Activated T-helper 1 cell treated with anti-CD3 and anti-CD28 coated beads, Interleukin-12 subunit alpha, Interleukin-12 subunit beta, Interleukin-2, Interleukin-4 antibody, amounts not matched to agents 30 ng/mL and 10 ng/mL and 1 ng/mL, durations not matched to agents 14 hours and 24 hours and 36 hours (primary cell): ENCODE measurements at regions of chr16 and their contacts with region 1.

Region 1: GRCh38 chr16:66406534-66407221 is 20.4 kb upstream of the BEAN1 start:
- DNase-seq: peak; percentile 77
- H3K4me3 Mint-ChIP-seq: peak overlapping the region; percentile 84
- H3K27ac Mint-ChIP-seq: peak overlapping the region; percentile 25
- H3K4me1 Mint-ChIP-seq: peaks cover 26% of the 10 kb centered on the region
- H3K27me3 Mint-ChIP-seq: peaks cover 23% of the 10 kb centered on the region

Region 2: GRCh38 chr16:66483689-66484481 is 77.2 kb after region 1 on chr16:
- intact Hi-C with region 1: loop called (anchors 1 kb)
- DNase-seq: peak; percentile 68
- H3K4me3 Mint-ChIP-seq: no peak overlapping the region
- H3K27ac Mint-ChIP-seq: peak overlapping the region; percentile 29
- H3K4me1 Mint-ChIP-seq: peaks cover 27% of the 10 kb centered on the region
- H3K27me3 Mint-ChIP-seq: no peaks in the 10 kb centered on the region

Region 3: DNA sequence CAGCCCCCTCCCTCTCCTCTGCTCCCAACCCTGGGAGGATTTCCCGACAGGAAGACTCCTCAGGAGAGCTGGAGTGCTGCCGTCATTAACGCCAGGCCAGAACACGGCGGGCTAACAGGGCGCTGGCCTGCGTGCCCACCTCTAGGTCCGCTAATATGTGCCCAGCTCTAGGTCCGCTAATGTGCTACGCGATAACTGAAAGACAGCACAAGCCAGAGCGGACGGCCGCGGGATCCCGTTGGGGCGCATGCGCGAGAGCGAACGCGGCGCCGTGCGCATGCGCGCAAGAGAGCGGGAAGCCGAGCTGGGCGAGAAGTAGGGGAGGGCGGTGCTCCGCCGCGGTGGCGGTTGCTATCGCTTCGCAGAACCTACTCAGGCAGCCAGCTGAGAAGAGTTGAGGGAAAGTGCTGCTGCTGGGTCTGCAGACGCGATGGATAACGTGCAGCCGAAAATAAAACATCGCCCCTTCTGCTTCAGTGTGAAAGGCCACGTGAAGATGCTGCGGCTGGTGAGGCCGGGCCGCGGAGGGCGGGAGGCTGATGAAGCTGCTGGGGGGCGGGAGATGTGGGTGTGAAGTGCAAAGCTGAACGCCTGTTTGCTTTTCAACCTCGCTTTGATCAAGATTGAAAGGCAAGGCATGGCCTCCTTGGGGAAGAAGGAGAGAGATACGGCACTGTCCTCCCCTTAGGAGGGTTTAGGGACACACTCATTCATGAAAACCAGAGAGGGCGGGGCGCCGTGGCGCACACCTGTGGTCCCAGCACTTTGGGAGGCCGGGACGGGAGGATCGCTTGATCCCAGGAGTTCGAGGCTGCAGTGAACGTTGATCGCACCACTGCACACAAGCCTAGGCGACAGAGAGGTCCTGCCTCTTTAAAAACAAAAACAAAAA is 145.9 kb after region 1 on chr16 and contains the start of gene CKLF:
- intact Hi-C with region 1: loop called (anchors 1 kb)
- DNase-seq: peak; percentile 93
- H3K4me3 Mint-ChIP-seq: peak within 1 kb of the TSS; percentile 99
- H3K27ac Mint-ChIP-seq: peak within 1 kb of the TSS; percentile 95
- H3K4me1 Mint-ChIP-seq: peaks cover 81% of the 10 kb centered on the region
- H3K27me3 Mint-ChIP-seq: peaks cover 2% of the 10 kb centered on the region
- total RNA-seq, gene CKLF: 153 and 159 TPM in 2 replicates

Region 4: GRCh38 chr16:66728117-66728787 is 321.6 kb after region 1 on chr16:
- intact Hi-C with region 1: loop called (anchors 1 kb)
- DNase-seq: no peak
- H3K4me3 Mint-ChIP-seq: no peak overlapping the region
- H3K27ac Mint-ChIP-seq: no peak overlapping the region
- H3K4me1 Mint-ChIP-seq: peaks cover 16% of the 10 kb centered on the region
- H3K27me3 Mint-ChIP-seq: no peaks in the 10 kb centered on the region

Region 5: GRCh38 chr16:66872943-66873684 is 466.4 kb after region 1 on chr16:
- intact Hi-C with region 1: loop called (anchors 5 kb)
- DNase-seq: peak; percentile 90
- H3K4me3 Mint-ChIP-seq: peak overlapping the region; percentile 80
- H3K27ac Mint-ChIP-seq: peak overlapping the region; percentile 92
- H3K4me1 Mint-ChIP-seq: peaks cover 60% of the 10 kb centered on the region
- H3K27me3 Mint-ChIP-seq: no peaks in the 10 kb centered on the region